HepG2 (cell line): ENCODE measurements at regions of chr5 and their contacts with region 1.

Region 1: GRCh38 chr5:177006265-177006972 is at the start of gene UIMC1:
- DNase-seq: peak; percentile 82
- ATAC-seq: peak; percentile 85
- H3K4me3 ChIP-seq: peak within 1 kb of the TSS; percentile 97 to 99 (median 99)
- H3K27ac ChIP-seq: peak within 1 kb of the TSS; percentile 96
- H3K4me1 ChIP-seq: peaks cover 20% of the 10 kb centered on the region
- H3K27me3 ChIP-seq: no peaks in the 10 kb centered on the region
- CTCF ChIP-seq: no peak
- EP300 ChIP-seq: no peak
- POLR2A ChIP-seq: peak; percentile 63 to 75
- RAD21 ChIP-seq: 0 out of 2 replicates have a peak, but pooled peaks have one; percentile 14
- total RNA-seq, gene UIMC1: 32.7 and 37.5 TPM in 2 replicates

Region 2: GRCh38 chr5:176948458-176948857 is 58.0 kb before region 1 on chr5:
- CTCF ChIA-PET with region 1: no interaction called
- POLR2A ChIA-PET with region 1: no interaction called
- in situ Hi-C with region 1: no loop called
- intact Hi-C with region 1: no loop called
- DNase-seq: no peak
- ATAC-seq: no peak
- H3K4me3 ChIP-seq: no peak overlapping the region
- H3K27ac ChIP-seq: no peak overlapping the region
- H3K4me1 ChIP-seq: peaks cover 11% of the 10 kb centered on the region
- H3K27me3 ChIP-seq: no peaks in the 10 kb centered on the region
- CTCF ChIP-seq: no peak
- EP300 ChIP-seq: no peak
- POLR2A ChIP-seq: no peak
- RAD21 ChIP-seq: no peak

Region 3: DNA sequence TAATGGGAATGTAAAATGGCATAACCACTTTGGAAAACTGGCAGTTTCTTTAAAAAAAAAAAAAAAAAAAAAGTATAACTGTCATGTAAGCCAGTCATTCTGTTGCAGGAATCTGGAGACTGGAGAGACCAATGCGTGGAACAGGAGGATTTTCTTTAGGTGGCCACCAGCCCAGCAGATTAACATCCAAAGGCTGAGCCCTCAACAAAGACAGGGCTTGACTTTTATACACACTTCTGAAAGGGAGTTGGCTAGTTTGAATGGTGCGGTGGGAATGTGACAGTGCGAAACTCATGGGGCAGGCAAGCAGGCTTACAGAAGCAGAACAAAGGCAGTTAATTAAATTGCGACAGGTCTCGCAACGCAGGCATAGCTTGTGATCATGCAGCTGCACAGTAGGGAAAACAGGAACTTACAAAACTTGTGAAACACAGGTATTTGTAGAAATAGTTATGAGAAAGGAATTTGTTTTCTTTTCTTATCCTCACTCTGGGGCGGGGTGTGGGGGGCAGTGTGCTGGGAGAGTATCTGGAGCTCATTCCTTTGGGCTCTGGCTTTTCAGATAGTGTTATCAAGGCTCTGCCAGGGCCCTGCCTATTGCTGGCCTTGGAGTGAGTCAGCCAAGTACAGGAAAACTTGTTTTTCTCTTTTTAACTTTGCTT is 11.8 kb before region 1 on chr5:
- CTCF ChIA-PET with region 1: no interaction called
- POLR2A ChIA-PET with region 1: interaction called, 10 read pairs
- in situ Hi-C with region 1: no loop called
- intact Hi-C with region 1: no loop called
- DNase-seq: peak; percentile 87
- ATAC-seq: peak; percentile 87
- H3K4me3 ChIP-seq: no peak overlapping the region
- H3K27ac ChIP-seq: peak overlapping the region; percentile 54
- H3K4me1 ChIP-seq: peaks cover 46% of the 10 kb centered on the region
- H3K27me3 ChIP-seq: no peaks in the 10 kb centered on the region
- CTCF ChIP-seq: no peak
- EP300 ChIP-seq: peak in 1 of 2 experiments; percentile 26; a peak in 1 of 4 replicates
- POLR2A ChIP-seq: no peak
- RAD21 ChIP-seq: no peak

Region 4: DNA sequence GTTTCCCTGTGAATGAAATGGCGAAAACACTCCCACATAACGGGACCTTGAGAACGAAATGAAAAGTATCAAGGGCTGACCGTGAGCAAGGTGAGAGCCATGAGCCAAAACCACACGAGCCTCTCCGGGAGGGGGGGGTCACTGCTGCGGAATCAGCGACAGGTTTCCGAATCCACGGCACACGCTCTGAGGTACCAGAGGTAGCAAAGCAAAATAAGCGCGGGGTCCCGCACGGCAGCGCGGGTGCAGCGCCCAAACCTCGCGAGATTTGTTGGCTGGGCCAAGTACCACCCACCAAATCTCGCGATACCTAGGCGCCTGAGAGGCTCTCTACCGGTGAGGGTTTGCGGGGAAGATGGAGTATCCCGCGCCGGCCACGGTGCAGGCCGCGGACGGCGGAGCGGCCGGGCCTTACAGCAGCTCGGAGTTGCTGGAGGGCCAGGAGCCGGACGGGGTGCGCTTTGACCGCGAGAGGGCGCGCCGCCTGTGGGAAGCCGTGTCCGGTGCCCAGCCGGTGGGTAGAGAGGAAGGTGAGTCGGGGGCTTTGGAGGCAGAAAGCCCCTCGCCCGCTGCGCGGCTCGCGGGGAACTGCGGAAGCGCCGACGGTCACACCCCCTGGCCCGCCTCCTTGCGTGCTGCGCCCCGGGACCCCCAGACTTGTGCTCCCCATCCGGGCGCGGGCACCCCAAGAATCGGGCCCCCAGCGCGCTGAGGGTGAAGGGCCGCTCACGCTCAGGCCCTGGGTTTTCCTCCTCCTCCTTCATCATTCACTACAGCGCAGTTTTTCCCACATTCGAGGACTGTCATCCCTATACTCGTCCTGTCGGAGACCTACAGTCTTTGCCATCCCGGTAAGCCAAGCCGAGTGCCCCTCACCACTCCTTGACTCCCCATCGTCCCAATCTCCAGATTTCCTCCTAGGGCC is 16.2 kb after region 1 on chr5 and contains the start of gene ZNF346:
- CTCF ChIA-PET with region 1: no interaction called
- POLR2A ChIA-PET with region 1: interaction called, 17 read pairs
- in situ Hi-C with region 1: no loop called
- intact Hi-C with region 1: loop called (anchors 1 kb)
- DNase-seq: peak; percentile 90
- ATAC-seq: peak; percentile 94
- H3K4me3 ChIP-seq: peak within 1 kb of the TSS; percentile 60 to 93 (median 91)
- H3K27ac ChIP-seq: peak within 1 kb of the TSS; percentile 82
- H3K4me1 ChIP-seq: peaks cover 32% of the 10 kb centered on the region
- H3K27me3 ChIP-seq: no peaks in the 10 kb centered on the region; a peak in 1 of 5 replicates
- CTCF ChIP-seq: peak; percentile 71
- EP300 ChIP-seq: no peak
- POLR2A ChIP-seq: peak; percentile 81 to 85
- RAD21 ChIP-seq: peak; percentile 60
- total RNA-seq, gene ZNF346: 19.4 and 20.1 TPM in 2 replicates